ENCODE measurements at regions of chr12 and their contacts with region 1.

Region 1: DNA sequence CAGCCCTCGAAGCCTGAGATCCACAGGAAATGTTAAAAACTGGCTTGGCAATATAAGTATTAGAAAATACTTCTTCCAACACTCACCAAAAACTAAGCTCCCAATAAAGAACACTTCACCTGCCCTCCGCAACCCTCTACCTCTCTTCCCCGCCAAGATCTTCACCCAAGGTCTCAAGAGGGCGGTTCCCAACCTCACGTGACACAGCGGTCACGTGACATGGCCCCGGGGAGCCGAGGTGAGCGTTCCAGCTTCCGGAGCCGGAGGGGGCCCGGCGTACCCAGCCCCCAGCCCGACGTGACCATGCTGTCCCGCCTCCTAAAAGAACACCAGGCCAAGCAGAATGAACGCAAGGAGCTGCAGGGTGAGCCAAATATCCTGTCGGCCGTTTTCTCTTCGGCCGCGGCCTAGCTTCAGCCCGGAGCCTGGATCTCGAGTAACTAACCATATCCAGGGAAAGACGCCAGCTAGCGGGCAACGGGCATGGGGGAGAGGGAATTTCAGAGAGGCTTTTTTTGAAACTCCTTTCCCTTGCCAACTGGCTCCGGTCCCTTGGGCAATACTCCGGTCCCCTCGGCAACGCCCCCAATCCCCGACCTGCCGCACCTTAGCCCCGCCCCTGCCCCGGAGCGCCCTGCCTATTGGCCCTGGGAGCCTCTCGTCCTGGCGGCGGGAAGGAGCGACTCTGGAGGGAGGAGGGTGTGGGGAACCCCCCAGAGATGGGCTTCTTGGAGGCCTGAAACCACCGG is at the start of gene BLOC1S1:
- DNase-seq: peak; percentile 92
- ATAC-seq: peak; percentile 94
- H3K4me3 Mint-ChIP-seq: peak within 1 kb of the TSS; percentile 92
- H3K27ac Mint-ChIP-seq: peak within 1 kb of the TSS; percentile 91
- H3K4me1 Mint-ChIP-seq: peaks cover 34% of the 10 kb centered on the region
- H3K27me3 Mint-ChIP-seq: peaks cover 2% of the 10 kb centered on the region
- CTCF ChIP-seq: no peak
- total RNA-seq, gene BLOC1S1: 91.0 and 104 TPM in 2 replicates

Region 2: GRCh38 chr12:55673638-55674037 is 42.4 kb before region 1 on chr12:
- CTCF ChIA-PET with region 1: interaction called, 4 read pairs
- POLR2A ChIA-PET with region 1: interaction called, 16 read pairs
- intact Hi-C with region 1: no loop called
- DNase-seq: no peak
- ATAC-seq: peak; percentile 99
- H3K4me3 Mint-ChIP-seq: peak overlapping the region; percentile 21
- H3K27ac Mint-ChIP-seq: peak overlapping the region; percentile 90
- H3K4me1 Mint-ChIP-seq: peaks cover 28% of the 10 kb centered on the region
- H3K27me3 Mint-ChIP-seq: no peaks in the 10 kb centered on the region
- CTCF ChIP-seq: no peak

Region 3: GRCh38 chr12:55728939-55729823 is 13.2 kb after region 1 on chr12 and contains the start of gene CD63:
- CTCF ChIA-PET with region 1: no interaction called
- POLR2A ChIA-PET with region 1: interaction called, 29 read pairs
- intact Hi-C with region 1: loop called (anchors 1 kb)
- DNase-seq: peak; percentile 68
- ATAC-seq: peak; percentile 64
- H3K4me3 Mint-ChIP-seq: peak within 1 kb of the TSS; percentile 89
- H3K27ac Mint-ChIP-seq: peak within 1 kb of the TSS; percentile 88
- H3K4me1 Mint-ChIP-seq: peaks cover 37% of the 10 kb centered on the region
- H3K27me3 Mint-ChIP-seq: no peaks in the 10 kb centered on the region
- CTCF ChIP-seq: no peak
- total RNA-seq, gene CD63: 104 and 111 TPM in 2 replicates